Esophagus muscularis mucosa (tissue), 4 donors: ENCODE measurements at regions of chr15 and their contacts with region 1.

Region 1: GRCh38 chr15:69265347-69265955 is 33.3 kb upstream of the PAQR5 start:
- DNase-seq: no peak
- H3K4me3 ChIP-seq: no peak overlapping the region
- H3K27ac ChIP-seq: no peak overlapping the region
- H3K4me1 ChIP-seq: no peaks in the 10 kb centered on the region
- H3K27me3 ChIP-seq: no peaks in the 10 kb centered on the region
- CTCF ChIP-seq: peak; percentile 41 to 60 (median 54)
- EP300 ChIP-seq: no peak
- POLR2A ChIP-seq: no peak

Region 2: DNA sequence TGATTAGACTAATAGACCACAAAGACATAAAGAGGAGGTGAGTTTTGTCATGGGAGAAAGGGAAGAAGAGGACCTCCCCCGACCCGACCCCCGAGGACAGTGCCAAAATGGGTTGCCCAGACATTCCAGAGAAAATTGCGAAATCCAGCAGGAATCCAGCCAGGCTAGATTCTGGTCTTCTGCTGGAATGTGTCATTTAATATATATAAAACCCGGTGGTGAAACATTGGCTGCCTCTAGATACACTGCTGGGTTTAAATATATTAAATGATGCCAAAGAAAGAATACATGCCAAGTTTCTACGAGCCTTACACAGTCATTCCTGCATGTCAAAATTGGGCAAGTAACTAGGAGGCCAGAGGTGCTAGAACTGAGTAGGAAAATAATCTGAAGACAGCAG is 380.4 kb before region 1 on chr15:
- intact Hi-C with region 1: no loop called
- DNase-seq: peak; percentile 74
- H3K4me3 ChIP-seq: no peak overlapping the region
- H3K27ac ChIP-seq: no peak overlapping the region
- H3K4me1 ChIP-seq: peaks cover 7 to 15% (median 11%) of the 10 kb centered on the region in 4 donors
- H3K27me3 ChIP-seq: no peaks in the 10 kb centered on the region
- CTCF ChIP-seq: no peak
- EP300 ChIP-seq: no peak
- POLR2A ChIP-seq: no peak

Region 3: GRCh38 chr15:69058830-69059556 is 206.5 kb before region 1 on chr15:
- intact Hi-C with region 1: loop called (anchors 5 kb)
- DNase-seq: peak; percentile 96
- H3K4me3 ChIP-seq: peak overlapping the region in 1 of 4 donors; percentile 9
- H3K27ac ChIP-seq: no peak overlapping the region
- H3K4me1 ChIP-seq: peaks cover 7 to 11% (median 9%) of the 10 kb centered on the region in 4 donors
- H3K27me3 ChIP-seq: peaks cover 0 to 33% (median 0%) of the 10 kb centered on the region in 4 donors
- CTCF ChIP-seq: peak; percentile 83 to 84 (median 83)
- EP300 ChIP-seq: no peak
- POLR2A ChIP-seq: no peak

Region 4: GRCh38 chr15:69160141-69160993 is 105.1 kb before region 1 on chr15 and contains the start of gene GLCE:
- intact Hi-C with region 1: loop called (anchors 2 kb)
- DNase-seq: peak; percentile 96
- H3K4me3 ChIP-seq: peak within 1 kb of the TSS; percentile 75 to 97 (median 92)
- H3K27ac ChIP-seq: peak within 1 kb of the TSS; percentile 80 to 86 (median 84)
- H3K4me1 ChIP-seq: peaks cover 0 to 15% (median 12%) of the 10 kb centered on the region in 4 donors
- H3K27me3 ChIP-seq: no peaks in the 10 kb centered on the region
- CTCF ChIP-seq: peak in 1 of 3 experiments; percentile 8
- EP300 ChIP-seq: no peak
- POLR2A ChIP-seq: peak; percentile 36
- total RNA-seq, gene GLCE: 9.6 to 13.2 (median 9.8) TPM

Region 5: GRCh38 chr15:69394556-69395282 is 129.3 kb after region 1 on chr15:
- intact Hi-C with region 1: loop called (anchors 10 kb)
- DNase-seq: peak; percentile 94
- H3K4me3 ChIP-seq: peak overlapping the region in 3 of 4 donors; percentile 7 to 38 (median 19)
- H3K27ac ChIP-seq: no peak overlapping the region
- H3K4me1 ChIP-seq: peaks cover 7 to 10% (median 10%) of the 10 kb centered on the region in 4 donors
- H3K27me3 ChIP-seq: peaks cover 0 to 10% (median 0%) of the 10 kb centered on the region in 4 donors
- CTCF ChIP-seq: peak; percentile 90 to 98 (median 97)
- EP300 ChIP-seq: no peak
- POLR2A ChIP-seq: no peak